ENCODE measurements at regions of chr4 and their contacts with region 1.

Region 1: GRCh38 chr4:94332983-94333590 is 9.5 kb downstream of the HPGDS start:
- DNase-seq: no peak
- ATAC-seq: peak; percentile 52

Region 2: DNA sequence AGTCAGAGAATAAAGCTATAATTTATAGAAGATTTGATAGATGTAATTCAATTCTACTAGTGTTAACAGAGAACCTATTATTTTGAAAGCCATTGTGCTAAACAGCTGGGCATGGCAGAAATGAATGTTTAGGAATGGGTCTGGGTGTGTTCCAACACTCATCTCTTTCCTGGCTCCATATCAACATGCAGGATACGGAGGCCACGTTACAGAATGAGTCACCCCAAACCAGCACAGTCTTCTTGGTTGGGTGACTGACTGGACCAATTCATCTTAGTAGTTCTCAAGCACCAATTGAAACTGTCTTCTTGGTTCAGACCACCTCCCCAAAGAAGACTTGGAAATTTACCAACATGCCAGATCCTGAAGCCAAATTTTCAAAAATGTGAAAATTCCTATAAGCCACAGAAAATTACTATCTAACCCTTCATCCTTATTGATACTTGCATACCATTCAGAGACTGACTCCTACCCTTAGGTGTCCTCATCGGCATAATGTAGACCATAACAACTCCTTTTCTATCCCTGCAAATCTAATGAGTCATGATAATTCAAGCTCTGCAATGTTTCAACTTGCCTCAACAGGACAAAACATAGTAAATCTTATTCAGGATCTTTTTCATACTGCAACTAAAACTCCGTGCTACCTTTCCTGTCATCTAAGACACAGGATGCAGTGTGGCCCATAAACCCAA is 556.6 kb before region 1 on chr4:
- intact Hi-C with region 1: no loop called
- DNase-seq: no peak
- ATAC-seq: no peak

Region 3: DNA sequence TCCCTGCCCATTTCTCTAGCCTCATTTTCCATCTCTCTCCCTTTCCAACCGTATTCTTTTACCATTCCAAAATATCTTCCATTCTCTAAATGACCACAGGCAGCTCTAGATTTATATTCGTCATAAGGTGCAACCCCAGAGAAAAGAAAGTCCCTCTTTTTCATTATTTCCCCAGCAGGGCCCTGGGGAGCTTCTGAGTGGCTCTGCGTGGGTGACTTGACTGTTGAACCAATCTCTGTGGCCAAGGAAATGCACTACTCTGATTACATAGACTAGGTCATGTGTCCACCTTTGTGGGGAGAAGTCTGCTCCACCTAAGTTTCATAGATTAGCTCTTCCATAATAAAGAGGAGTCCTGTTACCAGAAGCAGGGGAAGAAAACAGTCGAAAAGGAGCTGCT is 453.2 kb before region 1 on chr4:
- intact Hi-C with region 1: no loop called
- DNase-seq: no peak
- ATAC-seq: no peak

Region 4: GRCh38 chr4:94363136-94363655 is 30.1 kb after region 1 on chr4:
- intact Hi-C with region 1: no loop called
- DNase-seq: no peak
- ATAC-seq: no peak

Region 5: DNA sequence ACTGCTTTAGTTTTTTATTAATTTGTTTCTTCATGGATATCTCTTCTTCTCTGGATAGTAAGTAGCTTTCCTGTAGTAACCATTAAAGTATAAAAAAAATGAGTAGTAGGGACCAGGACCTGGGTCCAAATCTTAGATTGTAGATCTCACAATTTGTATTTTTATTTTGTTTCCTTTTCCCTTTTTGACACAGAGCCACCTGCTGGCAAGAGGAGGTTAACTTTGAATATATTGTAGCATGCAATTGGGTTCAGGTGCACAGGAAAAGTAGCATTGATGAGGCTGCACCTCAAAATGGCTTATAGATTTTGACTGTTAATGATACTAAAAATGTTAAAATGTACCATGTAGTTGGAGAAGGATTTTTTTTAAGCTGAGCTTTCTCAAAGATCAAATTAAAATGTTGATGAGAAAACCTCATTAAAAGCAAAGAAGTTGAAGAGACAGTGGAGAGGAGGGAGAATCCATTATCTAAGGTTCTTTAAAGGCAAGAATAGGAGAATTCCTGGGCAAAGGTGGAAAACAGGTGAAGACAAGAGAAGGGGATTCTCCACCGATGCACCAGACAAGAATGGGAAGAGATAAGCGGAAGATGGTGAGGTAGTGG is 57.8 kb after region 1 on chr4:
- intact Hi-C with region 1: loop called (anchors 10 kb)
- DNase-seq: no peak
- ATAC-seq: no peak

Region 6: GRCh38 chr4:94516067-94516466 is 183.0 kb after region 1 on chr4:
- intact Hi-C with region 1: no loop called
- DNase-seq: no peak
- ATAC-seq: no peak